Activated CD8-positive, alpha-beta T cell treated with anti-CD3 and anti-CD28 coated beads for 36 hours (primary cell): ENCODE measurements at regions of chr3 and their contacts with region 1.

Region 1: GRCh38 chr3:193040836-193041672 is 123.4 kb upstream of the MB21D2 start:
- DNase-seq: no peak
- ATAC-seq: no peak
- H3K4me3 Mint-ChIP-seq: no peak overlapping the region
- H3K27ac Mint-ChIP-seq: no peak overlapping the region
- H3K4me1 Mint-ChIP-seq: no peaks in the 10 kb centered on the region
- H3K27me3 Mint-ChIP-seq: peaks cover 3% of the 10 kb centered on the region
- CTCF ChIP-seq: peak; percentile 52

Region 2: DNA sequence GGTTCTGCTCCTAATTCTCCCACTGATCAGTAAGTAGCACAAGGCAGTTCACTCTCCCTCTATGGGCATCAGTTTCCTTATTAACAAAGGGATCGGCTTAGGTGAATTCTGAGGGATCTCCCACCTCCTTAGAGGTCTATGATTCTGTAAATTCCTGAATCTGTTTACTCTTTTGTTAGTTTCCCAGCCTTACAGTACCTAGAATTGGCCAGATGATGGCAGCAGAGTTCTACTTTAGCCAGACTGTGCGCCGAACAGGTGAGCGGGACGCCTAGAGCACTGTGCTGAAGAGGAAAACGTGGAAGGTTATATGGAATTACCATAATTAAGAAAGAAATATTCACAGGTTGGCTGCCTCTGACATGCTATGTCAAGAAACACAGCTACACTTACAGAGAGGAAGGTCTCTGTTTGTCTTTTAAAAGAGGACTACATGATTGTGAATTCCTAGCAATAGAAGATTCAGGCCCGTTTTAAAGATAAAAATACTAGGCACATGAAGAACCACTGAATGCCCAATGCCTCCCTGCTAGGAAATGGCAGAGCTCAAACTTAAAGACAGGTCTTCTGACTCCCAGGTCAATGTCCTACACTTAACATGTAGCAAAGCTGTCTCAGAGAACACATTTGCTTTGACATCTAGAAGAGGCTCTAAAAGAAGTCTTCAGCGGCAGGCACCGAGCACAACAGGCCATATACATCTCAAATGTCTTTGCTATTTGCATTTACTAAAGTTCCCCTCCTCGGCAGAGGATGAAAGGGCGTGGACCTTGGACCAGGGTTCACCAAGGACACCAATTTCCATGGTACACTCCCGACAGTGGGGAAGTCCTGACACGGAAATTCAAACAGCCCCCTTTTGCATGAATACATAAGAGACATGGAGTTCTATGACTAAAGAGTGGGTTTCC is 573.6 kb before region 1 on chr3:
- CTCF ChIA-PET with region 1: no interaction called
- POLR2A ChIA-PET with region 1: no interaction called
- intact Hi-C with region 1: loop called (anchors 10 kb)
- DNase-seq: peak; percentile 55
- ATAC-seq: peak; percentile 90
- H3K4me3 Mint-ChIP-seq: no peak overlapping the region
- H3K27ac Mint-ChIP-seq: no peak overlapping the region
- H3K4me1 Mint-ChIP-seq: no peaks in the 10 kb centered on the region
- H3K27me3 Mint-ChIP-seq: peaks cover 8% of the 10 kb centered on the region
- CTCF ChIP-seq: peak; percentile 80

Region 3: DNA sequence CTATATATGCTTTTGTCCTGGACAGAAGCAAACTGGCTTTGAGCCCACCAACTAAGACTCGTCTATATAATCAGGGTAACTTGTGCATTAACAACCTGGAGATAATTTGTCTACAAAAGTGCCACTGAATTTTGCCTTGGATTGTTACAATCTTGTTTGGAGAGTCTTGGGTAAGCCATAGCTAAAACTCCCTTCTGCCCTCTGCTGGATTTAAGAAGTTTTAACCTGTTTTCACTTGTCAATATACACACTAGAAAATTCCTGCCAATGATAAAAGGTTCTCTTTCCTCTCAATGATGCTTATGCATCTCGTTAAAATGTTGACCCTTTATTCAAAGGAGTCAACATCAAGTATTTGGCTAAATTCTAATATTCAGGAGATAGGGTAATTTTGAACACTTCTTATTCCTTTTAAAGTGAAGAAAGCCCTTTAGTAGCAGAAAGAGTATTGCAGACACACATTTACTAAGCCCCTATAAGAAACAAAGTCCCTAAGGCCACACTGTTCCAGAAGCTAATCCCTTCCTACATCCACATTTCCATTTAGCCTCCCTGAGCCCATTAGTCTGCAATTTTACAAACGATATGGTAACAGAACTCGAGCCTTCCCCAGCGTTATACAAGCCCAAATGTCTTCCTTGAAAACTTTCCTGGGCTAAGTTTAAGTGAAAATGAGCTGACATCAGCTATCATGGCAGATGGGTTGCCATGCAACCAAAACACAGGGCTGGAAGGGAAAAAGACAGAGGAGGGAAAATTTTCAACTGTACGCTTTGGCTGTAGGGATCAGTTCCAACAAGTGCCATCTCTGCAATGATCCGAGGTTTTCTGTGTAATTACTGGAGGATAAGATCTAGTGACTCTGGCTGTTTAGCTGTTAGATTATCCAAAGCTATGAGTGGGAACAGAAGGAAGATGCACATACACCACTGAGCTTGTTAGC is 237.8 kb before region 1 on chr3:
- CTCF ChIA-PET with region 1: interaction called, 10 read pairs
- POLR2A ChIA-PET with region 1: no interaction called
- intact Hi-C with region 1: no loop called
- DNase-seq: no peak
- ATAC-seq: no peak
- H3K4me3 Mint-ChIP-seq: no peak overlapping the region
- H3K27ac Mint-ChIP-seq: no peak overlapping the region
- H3K4me1 Mint-ChIP-seq: no peaks in the 10 kb centered on the region
- H3K27me3 Mint-ChIP-seq: no peaks in the 10 kb centered on the region
- CTCF ChIP-seq: peak; percentile 57

Region 4: GRCh38 chr3:192816351-192816750 is 224.7 kb before region 1 on chr3:
- CTCF ChIA-PET with region 1: interaction called, 124 read pairs
- POLR2A ChIA-PET with region 1: no interaction called
- intact Hi-C with region 1: loop called (anchors 2 kb)
- DNase-seq: no peak
- ATAC-seq: no peak
- H3K4me3 Mint-ChIP-seq: no peak overlapping the region
- H3K27ac Mint-ChIP-seq: no peak overlapping the region
- H3K4me1 Mint-ChIP-seq: peaks cover 22% of the 10 kb centered on the region
- H3K27me3 Mint-ChIP-seq: no peaks in the 10 kb centered on the region
- CTCF ChIP-seq: peak; percentile 69

Region 5: DNA sequence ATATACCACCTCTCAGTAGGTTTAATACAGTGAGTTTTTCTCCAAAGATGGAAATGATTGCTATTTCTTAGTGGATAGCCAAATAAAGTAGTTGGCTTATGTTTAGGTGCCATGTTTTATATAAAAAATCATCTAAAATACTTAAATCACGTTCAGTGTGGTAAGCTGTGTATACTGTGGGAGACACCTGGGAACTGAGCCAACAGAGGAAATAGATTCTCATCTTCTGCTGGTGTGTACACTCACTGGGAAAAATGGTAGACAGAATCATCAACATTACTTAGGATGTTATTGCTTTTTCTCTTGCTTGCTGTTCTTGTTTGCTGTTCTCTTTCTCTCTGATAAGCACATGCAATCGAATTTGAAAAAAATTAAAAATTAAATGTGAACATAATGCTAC is 10.8 kb before region 1 on chr3:
- CTCF ChIA-PET with region 1: interaction called, 16 read pairs
- POLR2A ChIA-PET with region 1: no interaction called
- intact Hi-C with region 1: no loop called
- DNase-seq: no peak
- ATAC-seq: no peak
- H3K4me3 Mint-ChIP-seq: no peak overlapping the region
- H3K27ac Mint-ChIP-seq: no peak overlapping the region
- H3K4me1 Mint-ChIP-seq: peaks cover 3% of the 10 kb centered on the region
- H3K27me3 Mint-ChIP-seq: peaks cover 8% of the 10 kb centered on the region
- CTCF ChIP-seq: no peak

Region 6: DNA sequence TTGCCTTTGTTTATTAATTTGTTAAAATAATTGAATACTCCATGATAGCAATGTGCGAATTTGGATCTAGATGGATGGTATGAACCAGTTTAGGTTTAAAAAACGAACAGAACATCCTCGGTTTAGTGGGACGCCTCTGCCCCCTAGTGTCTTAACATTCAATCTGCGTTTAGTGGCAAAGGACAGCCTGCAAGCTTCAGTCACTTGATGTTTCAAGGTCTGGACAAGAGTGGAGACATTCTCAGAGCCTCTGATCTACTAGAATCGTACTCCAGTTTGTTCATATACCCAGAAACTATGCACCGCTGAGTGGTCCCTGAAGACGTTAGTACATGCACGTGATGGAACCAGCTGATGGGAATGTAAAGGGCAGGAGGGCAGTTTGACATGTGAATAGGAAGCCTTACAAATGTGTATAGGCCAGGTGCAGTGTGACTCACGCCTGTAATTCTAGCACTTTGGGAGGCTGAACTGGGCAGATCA is 531.4 kb after region 1 on chr3:
- CTCF ChIA-PET with region 1: no interaction called
- POLR2A ChIA-PET with region 1: no interaction called
- intact Hi-C with region 1: loop called (anchors 10 kb)
- DNase-seq: peak; percentile 63
- ATAC-seq: peak; percentile 73
- H3K4me3 Mint-ChIP-seq: no peak overlapping the region
- H3K27ac Mint-ChIP-seq: no peak overlapping the region
- H3K4me1 Mint-ChIP-seq: no peaks in the 10 kb centered on the region
- H3K27me3 Mint-ChIP-seq: no peaks in the 10 kb centered on the region
- CTCF ChIP-seq: peak; percentile 78